Naive thymus-derived CD4-positive, alpha-beta T cell (primary cell): ENCODE measurements at regions of chr5 and their contacts with region 1.

Region 1: DNA sequence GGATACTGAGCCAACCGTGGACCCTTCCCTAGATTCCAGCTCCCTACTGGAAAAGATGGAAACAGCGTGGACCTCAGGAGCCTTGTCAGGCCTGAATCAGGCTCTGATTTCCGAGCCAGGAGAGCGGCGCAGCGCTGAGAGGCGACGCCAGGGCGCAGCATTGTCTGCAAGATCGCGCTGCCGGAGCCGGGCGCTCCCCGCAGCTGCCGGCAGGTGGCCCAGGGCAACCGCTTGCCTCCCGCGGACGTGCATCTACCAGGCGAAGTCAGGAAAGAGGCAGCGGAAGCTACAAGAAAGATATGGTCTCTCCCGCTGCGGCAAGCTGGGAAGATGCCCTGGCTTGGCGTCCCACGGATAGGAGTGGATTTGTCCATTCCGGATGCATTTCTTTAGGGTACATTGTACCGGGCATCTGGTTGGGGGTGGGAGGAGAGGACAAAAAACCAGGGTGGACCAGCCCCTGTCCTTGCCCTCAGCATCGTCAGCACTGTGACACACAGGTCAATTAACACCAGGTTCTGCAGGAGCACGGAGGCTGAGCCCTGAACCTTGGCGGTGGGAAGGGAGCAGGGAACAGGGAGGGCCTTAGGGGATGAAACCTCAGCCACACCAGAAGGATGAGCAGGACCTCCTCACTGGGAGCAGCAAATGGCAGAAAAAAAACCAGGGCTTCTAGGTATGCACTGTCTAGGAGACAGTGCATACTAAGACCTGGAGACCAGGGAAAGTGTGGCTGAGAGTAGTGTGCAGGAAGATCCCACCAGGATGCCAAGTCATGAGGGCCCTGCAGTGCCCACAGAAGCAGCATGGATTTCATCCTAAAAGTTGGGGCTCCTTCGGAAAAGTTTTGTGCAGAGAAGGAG is 55.9 kb downstream of the SFXN1 start:
- DNase-seq: peak; percentile 72 to 86 (median 83)
- ATAC-seq: peak; percentile 99
- H3K4me3 ChIP-seq: peak overlapping the region; percentile 40
- H3K4me3 Mint-ChIP-seq: peak overlapping the region; percentile 75 to 84 (median 77)
- H3K27ac ChIP-seq: no peak overlapping the region
- H3K27ac Mint-ChIP-seq: peak overlapping the region in 5 of 9 donors; percentile 15 to 71 (median 53)
- H3K4me1 ChIP-seq: peaks cover 4 to 16% of the 10 kb centered on the region in 2 donors
- H3K4me1 Mint-ChIP-seq: peaks cover 13 to 51% (median 30%) of the 10 kb centered on the region in 7 donors
- H3K27me3 ChIP-seq: no peaks in the 10 kb centered on the region
- H3K27me3 Mint-ChIP-seq: no peaks in the 10 kb centered on the region

Region 2: GRCh38 chr5:175517818-175518450 is 16.4 kb before region 1 on chr5:
- CTCF ChIA-PET with region 1: interaction called, 13 read pairs
- POLR2A ChIA-PET with region 1: interaction called, 3 read pairs
- intact Hi-C with region 1: loop called (anchors 1 kb)
- DNase-seq: peak in 2 of 9 donors; percentile 62 to 81
- ATAC-seq: no peak
- H3K4me3 ChIP-seq: no peak overlapping the region
- H3K4me3 Mint-ChIP-seq: peak overlapping the region; percentile 26 to 80 (median 54)
- H3K27ac ChIP-seq: peak overlapping the region; percentile 22
- H3K27ac Mint-ChIP-seq: peak overlapping the region; percentile 60 to 97 (median 93)
- H3K4me1 ChIP-seq: peaks cover 44 to 50% of the 10 kb centered on the region in 2 donors
- H3K4me1 Mint-ChIP-seq: peaks cover 47 to 87% (median 76%) of the 10 kb centered on the region in 7 donors
- H3K27me3 ChIP-seq: no peaks in the 10 kb centered on the region
- H3K27me3 Mint-ChIP-seq: no peaks in the 10 kb centered on the region

Region 3: DNA sequence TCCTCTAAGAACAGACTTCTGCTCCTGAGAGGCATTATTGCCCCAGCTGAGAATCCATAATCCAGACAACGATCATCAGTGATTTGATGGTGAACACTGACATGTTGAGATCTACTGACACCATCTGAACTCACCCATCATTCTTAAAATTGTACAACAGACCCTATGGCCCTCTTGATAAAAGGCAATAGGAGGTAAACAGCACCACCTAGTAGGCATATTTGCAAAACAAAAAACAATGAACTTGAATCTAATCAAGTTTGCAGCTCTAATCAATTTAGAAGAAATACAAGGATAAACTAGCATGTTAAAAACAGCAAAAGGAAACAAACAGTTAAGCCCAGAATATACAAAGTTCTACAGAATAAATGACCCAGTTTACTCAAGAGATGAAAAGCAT is 33.7 kb after region 1 on chr5:
- CTCF ChIA-PET with region 1: interaction called, 5 read pairs
- POLR2A ChIA-PET with region 1: no interaction called
- intact Hi-C with region 1: loop called (anchors 1 kb)
- DNase-seq: no peak
- ATAC-seq: no peak
- H3K4me3 ChIP-seq: no peak overlapping the region
- H3K4me3 Mint-ChIP-seq: no peak overlapping the region
- H3K27ac ChIP-seq: no peak overlapping the region
- H3K27ac Mint-ChIP-seq: peak overlapping the region in 1 of 9 donors; percentile 19
- H3K4me1 ChIP-seq: no peaks in the 10 kb centered on the region
- H3K4me1 Mint-ChIP-seq: peaks cover 0 to 8% (median 6%) of the 10 kb centered on the region in 7 donors
- H3K27me3 ChIP-seq: no peaks in the 10 kb centered on the region
- H3K27me3 Mint-ChIP-seq: peaks cover 0 to 18% (median 0%) of the 10 kb centered on the region in 5 donors

Region 4: GRCh38 chr5:175674731-175675346 is 140.5 kb after region 1 on chr5:
- CTCF ChIA-PET with region 1: interaction called, 11 read pairs
- POLR2A ChIA-PET with region 1: no interaction called
- intact Hi-C with region 1: no loop called
- DNase-seq: no peak
- ATAC-seq: peak; percentile 47
- H3K4me3 ChIP-seq: no peak overlapping the region
- H3K4me3 Mint-ChIP-seq: peak overlapping the region in 2 of 10 donors; percentile 13 to 52
- H3K27ac ChIP-seq: no peak overlapping the region
- H3K27ac Mint-ChIP-seq: peak overlapping the region in 8 of 9 donors; percentile 13 to 87 (median 58)
- H3K4me1 ChIP-seq: peaks cover 0 to 43% of the 10 kb centered on the region in 2 donors
- H3K4me1 Mint-ChIP-seq: peaks cover 62 to 94% (median 88%) of the 10 kb centered on the region in 7 donors
- H3K27me3 ChIP-seq: no peaks in the 10 kb centered on the region
- H3K27me3 Mint-ChIP-seq: no peaks in the 10 kb centered on the region

Region 5: DNA sequence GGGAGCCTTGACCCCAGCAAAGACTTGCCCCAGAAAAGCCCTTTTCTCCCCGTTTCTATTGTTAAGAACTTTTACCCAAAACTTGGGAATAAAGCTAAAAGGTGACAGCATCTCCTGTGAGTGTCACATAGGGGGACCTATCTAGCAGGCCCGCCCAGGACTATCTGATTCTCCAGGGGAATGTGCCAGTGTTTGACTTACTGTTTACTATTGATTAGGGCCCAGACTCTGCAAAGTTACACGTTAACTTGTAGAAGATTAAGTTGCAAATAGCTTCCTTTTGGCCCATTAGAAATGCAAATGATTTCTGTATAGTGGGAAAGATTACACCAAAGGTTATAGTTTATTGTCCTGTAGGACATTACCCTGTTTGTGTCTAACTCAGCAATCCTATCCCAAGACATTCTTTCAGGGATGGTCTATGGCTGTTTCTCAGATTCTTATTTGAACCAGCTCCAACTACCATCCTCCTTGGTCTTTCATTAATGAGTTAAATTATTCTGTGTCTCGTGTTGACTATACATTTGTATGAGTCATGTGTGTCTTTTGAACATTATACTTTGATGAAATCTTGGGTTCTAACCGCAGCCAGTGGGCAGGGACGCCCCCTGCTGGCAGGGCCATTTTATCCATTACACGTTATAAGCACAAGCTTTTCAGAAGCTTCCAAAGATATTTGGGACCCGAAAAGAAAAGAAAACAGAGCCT is 184.3 kb after region 1 on chr5:
- CTCF ChIA-PET with region 1: interaction called, 46 read pairs
- POLR2A ChIA-PET with region 1: interaction called, 4 read pairs
- intact Hi-C with region 1: loop called (anchors 1 to 2 kb)
- DNase-seq: peak; percentile 18 to 63 (median 45)
- ATAC-seq: peak; percentile 71
- H3K4me3 ChIP-seq: no peak overlapping the region
- H3K4me3 Mint-ChIP-seq: no peak overlapping the region
- H3K27ac ChIP-seq: no peak overlapping the region
- H3K27ac Mint-ChIP-seq: peak overlapping the region in 1 of 9 donors; percentile 44
- H3K4me1 ChIP-seq: no peaks in the 10 kb centered on the region
- H3K4me1 Mint-ChIP-seq: peaks cover 0 to 10% (median 4%) of the 10 kb centered on the region in 7 donors
- H3K27me3 ChIP-seq: no peaks in the 10 kb centered on the region
- H3K27me3 Mint-ChIP-seq: peaks cover 0 to 3% (median 0%) of the 10 kb centered on the region in 5 donors

Region 6: DNA sequence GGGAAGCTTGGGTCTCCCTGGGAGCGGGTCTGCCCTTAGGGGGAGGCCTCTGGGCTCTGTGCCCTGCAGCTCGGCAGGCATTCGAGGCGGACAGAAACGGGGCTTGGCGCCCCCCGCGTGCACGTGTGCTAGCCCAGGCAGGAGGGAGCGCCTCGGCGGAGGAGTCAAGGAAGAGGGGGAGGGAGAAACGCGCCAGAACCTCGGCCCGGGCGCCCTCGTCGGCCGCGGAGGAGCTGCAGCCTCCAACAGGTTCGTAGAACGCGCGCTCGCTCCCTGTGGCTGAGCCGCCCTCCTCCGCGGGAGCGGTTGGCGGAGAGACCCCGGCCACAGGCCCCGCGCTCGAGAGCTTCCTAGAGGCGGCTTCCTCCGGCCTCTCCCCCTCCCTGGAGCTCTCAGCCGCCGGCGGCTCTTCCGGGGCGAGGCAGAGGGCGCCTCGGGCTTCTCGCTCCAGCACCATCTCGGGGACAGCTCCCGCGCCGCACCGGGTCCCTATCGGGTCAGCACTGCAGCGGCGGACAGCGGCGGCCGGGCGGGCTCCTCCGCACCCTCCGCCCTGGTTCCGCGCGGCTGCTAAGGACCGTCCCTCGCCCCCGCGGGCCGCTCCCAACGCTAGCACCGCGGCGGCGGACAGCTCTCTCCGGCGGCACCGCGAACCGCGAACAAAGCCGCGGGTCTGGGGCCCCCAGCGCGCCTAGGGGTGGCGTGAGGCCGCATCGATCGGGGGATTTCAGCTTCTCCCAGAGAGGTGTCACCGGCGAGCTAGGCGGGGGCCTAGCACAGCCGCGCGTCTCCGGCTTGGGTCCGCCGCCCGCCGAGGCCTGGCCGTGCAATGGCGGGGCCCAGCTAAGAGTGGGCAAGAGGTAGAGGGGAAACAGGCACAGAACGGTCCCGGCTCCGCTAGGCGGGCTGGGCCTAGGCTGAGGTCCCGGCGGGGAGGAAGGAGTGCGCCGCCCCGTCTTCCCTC is 262.5 kb after region 1 on chr5:
- CTCF ChIA-PET with region 1: no interaction called
- POLR2A ChIA-PET with region 1: no interaction called
- intact Hi-C with region 1: loop called in 1 of 2 experiments (anchors 5 kb)
- DNase-seq: peak; percentile 76 to 88 (median 84)
- ATAC-seq: peak; percentile 100
- H3K4me3 ChIP-seq: no peak overlapping the region
- H3K4me3 Mint-ChIP-seq: peak overlapping the region in 2 of 10 donors; percentile 29 to 47
- H3K27ac ChIP-seq: no peak overlapping the region
- H3K27ac Mint-ChIP-seq: no peak overlapping the region
- H3K4me1 ChIP-seq: peaks cover 0 to 7% of the 10 kb centered on the region in 2 donors
- H3K4me1 Mint-ChIP-seq: peaks cover 4 to 27% (median 18%) of the 10 kb centered on the region in 7 donors
- H3K27me3 ChIP-seq: peaks cover 7 to 11% of the 10 kb centered on the region in 2 donors
- H3K27me3 Mint-ChIP-seq: peaks cover 50 to 74% (median 68%) of the 10 kb centered on the region in 5 donors